GM12878 (cell line): ENCODE measurements at regions of chr9 and their contacts with region 1.

Region 1: GRCh38 chr9:120974921-120975320 is 48.3 kb upstream of the TRAF1 start:
- DNase-seq: no peak
- ATAC-seq: no peak
- H3K4me3 ChIP-seq: no peak overlapping the region
- H3K27ac ChIP-seq: no peak overlapping the region
- H3K4me1 ChIP-seq: no peaks in the 10 kb centered on the region
- H3K27me3 ChIP-seq: no peaks in the 10 kb centered on the region
- CTCF ChIP-seq: no peak
- EP300 ChIP-seq: no peak
- POLR2A ChIP-seq: no peak
- RAD21 ChIP-seq: no peak

Region 2: GRCh38 chr9:120944434-120944843 is 30.5 kb before region 1 on chr9:
- CTCF ChIA-PET with region 1: no interaction called
- POLR2A ChIA-PET with region 1: interaction called, 3 read pairs
- RAD21 ChIA-PET with region 1: no interaction called
- SMC1A ChIA-PET with region 1: no interaction called
- in situ Hi-C with region 1: no loop called
- intact Hi-C with region 1: loop called (anchors 1 kb)
- DNase-seq: peak; percentile 96
- ATAC-seq: peak; percentile 100
- H3K4me3 ChIP-seq: no peak overlapping the region
- H3K27ac ChIP-seq: peak overlapping the region; percentile 54
- H3K4me1 ChIP-seq: peaks cover 17% of the 10 kb centered on the region
- H3K27me3 ChIP-seq: no peaks in the 10 kb centered on the region
- CTCF ChIP-seq: no peak
- EP300 ChIP-seq: peak; percentile 48 to 57; a peak in 2 of 4 replicates
- POLR2A ChIP-seq: no peak
- RAD21 ChIP-seq: no peak

Region 3: GRCh38 chr9:121393318-121393717 is 418.4 kb after region 1 on chr9:
- CTCF ChIA-PET with region 1: no interaction called
- POLR2A ChIA-PET with region 1: no interaction called
- RAD21 ChIA-PET with region 1: no interaction called
- SMC1A ChIA-PET with region 1: no interaction called
- in situ Hi-C with region 1: no loop called
- intact Hi-C with region 1: no loop called
- DNase-seq: no peak
- ATAC-seq: no peak
- H3K4me3 ChIP-seq: no peak overlapping the region
- H3K27ac ChIP-seq: no peak overlapping the region
- H3K4me1 ChIP-seq: no peaks in the 10 kb centered on the region
- H3K27me3 ChIP-seq: no peaks in the 10 kb centered on the region; a peak in 1 of 4 replicates
- CTCF ChIP-seq: no peak
- EP300 ChIP-seq: no peak
- POLR2A ChIP-seq: no peak
- RAD21 ChIP-seq: no peak